ENCODE measurements at regions of chr13 and their contacts with region 1.

Region 1: DNA sequence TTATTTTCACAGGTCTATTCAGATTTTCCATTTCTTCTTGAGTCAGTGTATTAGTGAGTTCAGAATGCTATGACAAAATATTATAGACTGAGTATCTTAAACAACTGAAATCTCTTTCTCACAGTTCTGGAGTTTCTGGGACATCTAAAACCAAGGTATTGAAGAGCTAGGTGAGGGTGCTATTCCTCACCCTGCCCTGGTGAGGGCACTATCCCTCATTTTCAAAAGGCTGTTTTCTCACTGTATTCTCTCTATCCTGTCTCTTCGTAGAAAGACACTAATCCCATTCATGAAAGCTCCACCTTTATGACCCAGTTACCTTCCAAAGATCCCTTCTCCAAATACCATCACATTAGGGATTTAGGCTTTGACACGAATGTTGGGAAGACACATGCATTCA is 1617.1 kb downstream of the PCDH9 start:
- DNase-seq: no peak
- H3K4me3 Mint-ChIP-seq: no peak overlapping the region
- H3K27ac Mint-ChIP-seq: no peak overlapping the region
- H3K4me1 Mint-ChIP-seq: no peaks in the 10 kb centered on the region
- H3K27me3 Mint-ChIP-seq: no peaks in the 10 kb centered on the region

Region 2: GRCh38 chr13:65633806-65634205 is 20.8 kb after region 1 on chr13:
- intact Hi-C with region 1: loop called (anchors 1 kb)
- DNase-seq: no peak
- H3K4me3 Mint-ChIP-seq: no peak overlapping the region
- H3K27ac Mint-ChIP-seq: no peak overlapping the region
- H3K4me1 Mint-ChIP-seq: no peaks in the 10 kb centered on the region
- H3K27me3 Mint-ChIP-seq: no peaks in the 10 kb centered on the region